GM23248 (cell line): ENCODE measurements at regions of chr3 and their contacts with region 1.

Region 1: DNA sequence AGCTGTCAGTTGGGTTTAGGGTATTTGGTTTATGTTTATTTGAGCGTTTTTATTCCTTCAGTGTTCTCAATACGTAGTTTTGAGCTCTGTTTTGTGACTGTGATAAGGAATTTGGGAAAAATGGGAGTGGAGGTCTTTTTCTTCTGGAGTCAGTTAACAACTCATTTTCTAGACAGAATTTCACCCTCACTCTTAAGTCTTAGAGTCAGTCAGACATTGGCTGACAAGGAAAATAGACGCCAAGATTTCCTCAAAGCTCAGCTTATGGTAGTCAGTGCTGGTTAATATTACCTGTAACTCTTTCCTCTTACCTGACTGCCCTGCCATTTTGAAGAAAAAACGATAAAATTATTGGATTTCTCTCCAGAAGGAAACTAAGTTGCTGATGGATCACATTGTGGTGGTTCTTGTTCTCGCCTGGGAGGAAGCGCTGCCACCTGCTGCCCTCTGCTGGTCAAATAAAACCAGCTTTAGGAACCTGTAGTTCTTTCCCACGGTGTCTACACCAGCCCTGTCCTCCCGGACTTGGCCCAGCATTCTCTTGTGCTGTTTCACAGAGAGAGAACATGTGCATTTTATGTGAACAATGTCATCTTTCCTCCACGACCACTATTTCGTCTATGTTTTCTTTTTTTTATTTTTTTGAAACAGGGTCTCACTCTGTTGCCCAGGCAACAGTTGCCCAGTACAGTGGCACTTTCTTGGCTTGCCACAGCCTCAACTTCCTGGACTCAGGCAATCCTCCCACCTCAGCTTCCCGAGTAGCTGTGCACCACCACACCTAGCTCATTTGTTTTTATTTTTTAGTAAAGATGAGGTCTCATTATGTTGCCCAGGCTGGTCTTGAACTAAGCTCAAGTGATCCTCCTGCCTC is 41.4 kb upstream of the UMPS start:
- DNase-seq: peak; percentile 86
- H3K4me3 ChIP-seq: no peak overlapping the region
- H3K27ac ChIP-seq: no peak overlapping the region
- H3K4me1 ChIP-seq: peaks cover 16% of the 10 kb centered on the region
- H3K27me3 ChIP-seq: no peaks in the 10 kb centered on the region; the same call in 1 of the 2 replicates

Region 2: DNA sequence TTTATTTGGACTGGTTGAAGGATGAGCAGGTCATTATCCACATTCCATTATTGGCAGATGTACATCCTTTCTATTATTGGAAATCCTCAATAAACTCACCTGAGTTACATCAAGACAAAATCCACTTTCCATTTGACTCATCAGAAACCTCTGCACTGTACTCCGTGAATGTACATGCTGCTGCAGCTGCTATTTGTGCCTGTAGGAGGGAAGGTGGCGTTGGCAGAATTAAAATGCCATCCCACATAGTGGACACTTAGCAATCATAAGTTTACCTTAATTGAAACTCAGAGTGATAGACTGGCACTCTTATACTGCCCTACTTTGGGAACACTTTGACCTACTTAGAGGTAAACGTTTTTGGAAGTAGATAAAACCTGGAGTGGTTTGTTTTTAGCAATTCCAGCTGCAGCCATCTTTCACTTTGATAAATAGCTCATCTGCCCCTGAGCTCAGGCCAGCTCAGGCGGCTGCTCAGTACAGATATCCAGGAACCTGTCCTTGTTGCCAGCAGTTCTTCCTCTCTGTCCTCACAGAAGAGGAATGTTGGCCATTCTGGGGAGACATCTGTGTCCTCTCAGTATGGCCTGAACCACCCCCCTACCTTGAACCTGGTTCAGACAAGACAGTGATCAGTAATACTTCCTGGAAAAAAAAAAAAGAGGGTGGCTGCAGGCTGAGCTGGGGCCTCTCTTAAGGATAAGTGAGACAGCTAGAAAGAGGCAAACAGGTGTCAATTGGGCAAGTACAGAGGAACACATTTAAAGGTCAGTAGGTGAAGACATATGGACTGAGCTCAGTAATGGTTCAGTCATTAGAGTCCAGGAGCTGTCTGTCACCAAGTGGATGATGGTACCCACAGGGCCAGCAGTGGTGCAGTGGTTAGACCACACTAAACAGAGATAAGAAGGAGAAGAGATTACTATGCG is 112.0 kb before region 1 on chr3:
- in situ Hi-C with region 1: loop called (anchors 10 kb)
- DNase-seq: no peak
- H3K4me3 ChIP-seq: no peak overlapping the region
- H3K27ac ChIP-seq: no peak overlapping the region
- H3K4me1 ChIP-seq: no peaks in the 10 kb centered on the region
- H3K27me3 ChIP-seq: no peaks in the 10 kb centered on the region

Region 3: GRCh38 chr3:125168711-125169393 is 480.0 kb after region 1 on chr3:
- in situ Hi-C with region 1: no loop called
- DNase-seq: no peak
- H3K4me3 ChIP-seq: no peak overlapping the region
- H3K27ac ChIP-seq: no peak overlapping the region
- H3K4me1 ChIP-seq: peaks cover 11% of the 10 kb centered on the region; the same call in 1 of the 2 replicates
- H3K27me3 ChIP-seq: no peaks in the 10 kb centered on the region